Naive thymus-derived CD4-positive, alpha-beta T cell (primary cell): ENCODE measurements at regions of chr3 and their contacts with region 1.

Region 1: GRCh38 chr3:50611464-50612233 is at the start of gene CISH:
- DNase-seq: peak; percentile 86 to 98 (median 89)
- ATAC-seq: peak; percentile 77
- H3K4me3 ChIP-seq: peak within 1 kb of the TSS; percentile 93
- H3K4me3 Mint-ChIP-seq: peak within 1 kb of the TSS; percentile 83 to 98 (median 92)
- H3K27ac ChIP-seq: peak within 1 kb of the TSS; percentile 93
- H3K27ac Mint-ChIP-seq: peak within 1 kb of the TSS; percentile 89 to 96 (median 94)
- H3K4me1 ChIP-seq: peaks cover 55 to 56% of the 10 kb centered on the region in 2 donors
- H3K4me1 Mint-ChIP-seq: peaks cover 53 to 80% (median 64%) of the 10 kb centered on the region in 7 donors
- H3K27me3 ChIP-seq: no peaks in the 10 kb centered on the region
- H3K27me3 Mint-ChIP-seq: peaks cover 0 to 2% (median 0%) of the 10 kb centered on the region in 5 donors
- total RNA-seq, gene CISH: 10.9 to 486 (median 28.5) TPM

Region 2: GRCh38 chr3:50298836-50299637 is 312.6 kb before region 1 on chr3 and contains the starts of genes HYAL3 and NAA80:
- CTCF ChIA-PET with region 1: no interaction called
- POLR2A ChIA-PET with region 1: no interaction called
- intact Hi-C with region 1: loop called in 1 of 2 experiments (anchors 5 kb)
- DNase-seq: peak; percentile 94 to 100 (median 99)
- ATAC-seq: peak; percentile 93
- H3K4me3 ChIP-seq: peak within 1 kb of the TSS; percentile 97
- H3K4me3 Mint-ChIP-seq: peak within 1 kb of the TSS; percentile 84 to 99 (median 97)
- H3K27ac ChIP-seq: peak within 1 kb of the TSS; percentile 86
- H3K27ac Mint-ChIP-seq: peak within 1 kb of the TSS; percentile 90 to 100 (median 99)
- H3K4me1 ChIP-seq: peaks cover 19 to 20% of the 10 kb centered on the region in 2 donors
- H3K4me1 Mint-ChIP-seq: peaks cover 12 to 36% (median 22%) of the 10 kb centered on the region in 7 donors
- H3K27me3 ChIP-seq: no peaks in the 10 kb centered on the region
- H3K27me3 Mint-ChIP-seq: no peaks in the 10 kb centered on the region
- total RNA-seq, gene HYAL3: 3.4 to 10.7 (median 4.2) TPM
- total RNA-seq, gene NAA80: 30.2 to 44.9 (median 33.6) TPM

Region 3: GRCh38 chr3:50450209-50450921 is 161.3 kb before region 1 on chr3:
- CTCF ChIA-PET with region 1: no interaction called
- POLR2A ChIA-PET with region 1: no interaction called
- intact Hi-C with region 1: loop called in 1 of 2 experiments (anchors 5 kb)
- DNase-seq: peak; percentile 57 to 75 (median 66)
- ATAC-seq: peak; percentile 86
- H3K4me3 ChIP-seq: peak overlapping the region; percentile 60
- H3K4me3 Mint-ChIP-seq: peak overlapping the region; percentile 82 to 91 (median 86)
- H3K27ac ChIP-seq: peak overlapping the region; percentile 81
- H3K27ac Mint-ChIP-seq: peak overlapping the region; percentile 85 to 98 (median 96)
- H3K4me1 ChIP-seq: peaks cover 13 to 16% of the 10 kb centered on the region in 2 donors
- H3K4me1 Mint-ChIP-seq: peaks cover 10 to 33% (median 28%) of the 10 kb centered on the region in 7 donors
- H3K27me3 ChIP-seq: no peaks in the 10 kb centered on the region
- H3K27me3 Mint-ChIP-seq: no peaks in the 10 kb centered on the region

Region 4: GRCh38 chr3:50600841-50601591 is 10.6 kb before region 1 on chr3:
- CTCF ChIA-PET with region 1: interaction called, 16 read pairs
- POLR2A ChIA-PET with region 1: interaction called, 101 read pairs
- intact Hi-C with region 1: loop called (anchors 1 kb)
- DNase-seq: peak; percentile 43 to 90 (median 58)
- ATAC-seq: peak; percentile 84
- H3K4me3 ChIP-seq: peak overlapping the region; percentile 57
- H3K4me3 Mint-ChIP-seq: peak overlapping the region; percentile 71 to 97 (median 84)
- H3K27ac ChIP-seq: peak overlapping the region; percentile 93
- H3K27ac Mint-ChIP-seq: peak overlapping the region; percentile 89 to 99 (median 95)
- H3K4me1 ChIP-seq: peaks cover 67 to 71% of the 10 kb centered on the region in 2 donors
- H3K4me1 Mint-ChIP-seq: peaks cover 63 to 83% (median 77%) of the 10 kb centered on the region in 7 donors
- H3K27me3 ChIP-seq: no peaks in the 10 kb centered on the region
- H3K27me3 Mint-ChIP-seq: no peaks in the 10 kb centered on the region

Region 5: DNA sequence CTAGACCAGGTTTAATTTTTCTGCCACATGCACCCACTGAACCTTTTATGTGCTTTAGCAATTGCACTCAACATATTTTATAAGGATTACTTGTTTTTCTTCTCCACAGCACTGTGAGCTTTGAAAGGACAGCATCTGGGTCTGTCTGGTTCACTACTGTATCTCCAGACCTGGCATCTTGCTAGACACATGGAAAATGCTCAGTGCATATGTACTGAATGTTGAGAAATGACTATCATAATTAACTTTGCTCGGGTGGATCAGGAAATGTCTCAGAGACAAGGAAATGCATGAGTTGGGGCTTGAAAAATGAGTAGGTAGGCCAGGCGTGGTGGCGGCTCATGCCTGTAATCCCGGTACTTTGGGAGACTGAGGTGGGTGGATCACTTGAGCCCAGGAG is 103.3 kb after region 1 on chr3:
- CTCF ChIA-PET with region 1: no interaction called
- POLR2A ChIA-PET with region 1: no interaction called
- intact Hi-C with region 1: no loop called
- DNase-seq: no peak
- ATAC-seq: no peak
- H3K4me3 ChIP-seq: no peak overlapping the region
- H3K4me3 Mint-ChIP-seq: no peak overlapping the region
- H3K27ac ChIP-seq: no peak overlapping the region
- H3K27ac Mint-ChIP-seq: no peak overlapping the region
- H3K4me1 ChIP-seq: no peaks in the 10 kb centered on the region
- H3K4me1 Mint-ChIP-seq: no peaks in the 10 kb centered on the region
- H3K27me3 ChIP-seq: no peaks in the 10 kb centered on the region
- H3K27me3 Mint-ChIP-seq: peaks cover 0 to 8% (median 0%) of the 10 kb centered on the region in 5 donors

Region 6: GRCh38 chr3:51024765-51025632 is 413.4 kb after region 1 on chr3:
- CTCF ChIA-PET with region 1: interaction called, 3 read pairs
- POLR2A ChIA-PET with region 1: interaction called, 3 read pairs
- intact Hi-C with region 1: loop called (anchors 2 to 5 kb)
- DNase-seq: peak; percentile 34 to 88 (median 81)
- ATAC-seq: peak; percentile 96
- H3K4me3 ChIP-seq: peak overlapping the region; percentile 55
- H3K4me3 Mint-ChIP-seq: peak overlapping the region; percentile 66 to 89 (median 78)
- H3K27ac ChIP-seq: peak overlapping the region; percentile 70
- H3K27ac Mint-ChIP-seq: peak overlapping the region; percentile 81 to 98 (median 96)
- H3K4me1 ChIP-seq: peaks cover 36 to 41% of the 10 kb centered on the region in 2 donors
- H3K4me1 Mint-ChIP-seq: peaks cover 27 to 72% (median 69%) of the 10 kb centered on the region in 7 donors
- H3K27me3 ChIP-seq: no peaks in the 10 kb centered on the region
- H3K27me3 Mint-ChIP-seq: peaks cover 0 to 8% (median 0%) of the 10 kb centered on the region in 5 donors

Region 7: GRCh38 chr3:51384726-51385473 is 773.3 kb after region 1 on chr3 and contains the start of gene MANF:
- CTCF ChIA-PET with region 1: interaction called, 12 read pairs
- POLR2A ChIA-PET with region 1: interaction called, 16 read pairs
- intact Hi-C with region 1: loop called (anchors 1 kb)
- DNase-seq: peak; percentile 87 to 98 (median 98)
- ATAC-seq: peak; percentile 97
- H3K4me3 ChIP-seq: peak within 1 kb of the TSS; percentile 92
- H3K4me3 Mint-ChIP-seq: peak within 1 kb of the TSS; percentile 89 to 99 (median 98)
- H3K27ac ChIP-seq: peak within 1 kb of the TSS; percentile 98
- H3K27ac Mint-ChIP-seq: peak within 1 kb of the TSS; percentile 98 to 99 (median 99)
- H3K4me1 ChIP-seq: peaks cover 22 to 31% of the 10 kb centered on the region in 2 donors
- H3K4me1 Mint-ChIP-seq: peaks cover 32 to 48% (median 46%) of the 10 kb centered on the region in 7 donors
- H3K27me3 ChIP-seq: no peaks in the 10 kb centered on the region
- H3K27me3 Mint-ChIP-seq: no peaks in the 10 kb centered on the region
- total RNA-seq, gene MANF: 28.2 to 182 (median 68.0) TPM

Region 8: GRCh38 chr3:51941798-51942602 is 1330.4 kb after region 1 on chr3 and contains the starts of genes PARP3 and RRP9:
- CTCF ChIA-PET with region 1: no interaction called
- POLR2A ChIA-PET with region 1: no interaction called
- intact Hi-C with region 1: loop called in 1 of 2 experiments (anchors 2 kb)
- DNase-seq: peak; percentile 97 to 100 (median 99)
- ATAC-seq: peak; percentile 98
- H3K4me3 ChIP-seq: peak within 1 kb of the TSS; percentile 78
- H3K4me3 Mint-ChIP-seq: peak within 1 kb of the TSS; percentile 72 to 94 (median 90)
- H3K27ac ChIP-seq: peak within 1 kb of the TSS; percentile 80
- H3K27ac Mint-ChIP-seq: peak within 1 kb of the TSS; percentile 78 to 92 (median 89)
- H3K4me1 ChIP-seq: peaks cover 19 to 23% of the 10 kb centered on the region in 2 donors
- H3K4me1 Mint-ChIP-seq: peaks cover 22 to 40% (median 31%) of the 10 kb centered on the region in 7 donors
- H3K27me3 ChIP-seq: no peaks in the 10 kb centered on the region
- H3K27me3 Mint-ChIP-seq: no peaks in the 10 kb centered on the region
- total RNA-seq, gene PARP3: 7.7 to 21.5 (median 11.2) TPM
- total RNA-seq, gene RRP9: 10.2 to 34.2 (median 16.6) TPM